A549 (cell line): ENCODE measurements at regions of chr19 and their contacts with region 1.

Region 1: DNA sequence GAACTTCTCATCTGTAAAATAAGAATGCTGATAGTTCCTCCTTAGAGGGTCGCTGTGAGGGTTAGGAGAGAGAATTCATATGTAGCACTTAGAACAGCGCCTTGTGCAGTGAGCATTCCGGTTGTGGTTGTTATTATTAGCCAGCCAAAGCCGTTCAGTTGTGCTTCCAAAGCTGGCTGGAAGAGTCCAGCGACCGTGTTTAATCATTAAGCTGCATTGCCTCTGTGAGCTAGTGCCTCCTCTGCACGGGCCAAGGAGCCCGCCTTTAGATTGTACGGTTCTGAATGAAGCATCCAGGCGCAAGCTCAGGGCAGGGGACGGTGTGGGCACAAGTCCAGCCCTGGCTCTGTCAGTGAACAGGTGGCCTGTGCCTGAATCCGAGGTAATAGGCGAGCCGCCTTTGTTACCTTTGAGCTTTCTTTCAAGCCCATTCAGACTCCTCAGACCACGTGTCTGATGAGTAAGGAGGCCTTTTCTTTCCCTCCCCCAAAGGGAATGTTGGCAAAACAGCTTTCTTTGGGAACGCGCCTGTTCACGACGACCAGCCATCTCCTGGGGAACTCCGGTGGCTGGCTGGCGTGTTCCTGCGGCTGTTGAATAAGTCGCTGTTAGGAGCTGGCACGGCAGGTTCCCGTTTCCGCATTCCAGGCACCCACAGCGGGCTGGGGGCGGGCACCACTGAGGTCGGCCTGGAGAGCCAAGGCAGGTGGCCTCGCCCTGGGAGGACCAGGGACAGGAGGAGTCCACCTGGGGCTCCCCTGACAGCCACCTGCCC is 25.1 kb downstream of the SIPA1L3 start:
- DNase-seq: peak; percentile 96 to 97
- ATAC-seq: peak; percentile 72 to 86
- H3K4me3 ChIP-seq: peak overlapping the region; percentile 51
- H3K27ac ChIP-seq: peak overlapping the region; percentile 88 to 95
- H3K4me1 ChIP-seq: peaks cover 61% of the 10 kb centered on the region
- CTCF ChIP-seq: no peak
- EP300 ChIP-seq: peak in 1 of 2 experiments; percentile 63; a peak in 1 of 5 replicates
- POLR2A ChIP-seq: peak; percentile 66
- RAD21 ChIP-seq: peak; percentile 22 to 46

Region 2: DNA sequence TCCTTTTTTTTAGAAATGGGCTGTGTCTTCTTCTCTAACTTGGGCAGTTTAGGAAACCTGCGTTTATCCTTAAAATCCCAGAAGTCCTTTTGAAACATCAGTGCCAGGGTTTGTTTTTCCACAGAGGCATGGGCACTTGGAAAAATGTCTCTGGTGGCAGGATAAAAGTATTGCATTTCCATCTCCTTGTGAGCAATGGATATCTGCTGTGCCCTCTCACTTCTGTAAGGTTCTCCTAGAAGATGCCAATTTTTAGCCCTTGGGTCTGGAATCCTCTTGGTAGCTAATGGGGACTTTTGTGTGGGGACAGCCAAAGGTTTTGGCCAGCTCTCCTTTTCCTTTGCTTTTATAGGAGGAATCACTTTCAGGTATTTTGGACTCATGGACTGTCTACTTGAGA is 46.7 kb before region 1 on chr19:
- CTCF ChIA-PET with region 1: no interaction called
- POLR2A ChIA-PET with region 1: no interaction called
- DNase-seq: peak; percentile 38 to 43
- ATAC-seq: peak; percentile 76; a peak in 5 of 6 replicates
- H3K4me3 ChIP-seq: no peak overlapping the region
- H3K27ac ChIP-seq: no peak overlapping the region
- H3K4me1 ChIP-seq: no peaks in the 10 kb centered on the region
- CTCF ChIP-seq: no peak
- EP300 ChIP-seq: no peak
- POLR2A ChIP-seq: no peak
- RAD21 ChIP-seq: no peak

Region 3: GRCh38 chr19:37920591-37921450 is 11.2 kb before region 1 on chr19:
- CTCF ChIA-PET with region 1: interaction called, 53 read pairs
- POLR2A ChIA-PET with region 1: interaction called, 11 read pairs
- DNase-seq: no peak
- ATAC-seq: 0 out of 6 replicates have a peak, but pooled peaks of 1 of the 2 experiments have one; percentile 23
- H3K4me3 ChIP-seq: no peak overlapping the region
- H3K27ac ChIP-seq: no peak overlapping the region
- H3K4me1 ChIP-seq: peaks cover 9% of the 10 kb centered on the region; the same call in 2 of the 3 replicates
- CTCF ChIP-seq: no peak
- EP300 ChIP-seq: no peak
- POLR2A ChIP-seq: no peak
- RAD21 ChIP-seq: no peak

Region 4: DNA sequence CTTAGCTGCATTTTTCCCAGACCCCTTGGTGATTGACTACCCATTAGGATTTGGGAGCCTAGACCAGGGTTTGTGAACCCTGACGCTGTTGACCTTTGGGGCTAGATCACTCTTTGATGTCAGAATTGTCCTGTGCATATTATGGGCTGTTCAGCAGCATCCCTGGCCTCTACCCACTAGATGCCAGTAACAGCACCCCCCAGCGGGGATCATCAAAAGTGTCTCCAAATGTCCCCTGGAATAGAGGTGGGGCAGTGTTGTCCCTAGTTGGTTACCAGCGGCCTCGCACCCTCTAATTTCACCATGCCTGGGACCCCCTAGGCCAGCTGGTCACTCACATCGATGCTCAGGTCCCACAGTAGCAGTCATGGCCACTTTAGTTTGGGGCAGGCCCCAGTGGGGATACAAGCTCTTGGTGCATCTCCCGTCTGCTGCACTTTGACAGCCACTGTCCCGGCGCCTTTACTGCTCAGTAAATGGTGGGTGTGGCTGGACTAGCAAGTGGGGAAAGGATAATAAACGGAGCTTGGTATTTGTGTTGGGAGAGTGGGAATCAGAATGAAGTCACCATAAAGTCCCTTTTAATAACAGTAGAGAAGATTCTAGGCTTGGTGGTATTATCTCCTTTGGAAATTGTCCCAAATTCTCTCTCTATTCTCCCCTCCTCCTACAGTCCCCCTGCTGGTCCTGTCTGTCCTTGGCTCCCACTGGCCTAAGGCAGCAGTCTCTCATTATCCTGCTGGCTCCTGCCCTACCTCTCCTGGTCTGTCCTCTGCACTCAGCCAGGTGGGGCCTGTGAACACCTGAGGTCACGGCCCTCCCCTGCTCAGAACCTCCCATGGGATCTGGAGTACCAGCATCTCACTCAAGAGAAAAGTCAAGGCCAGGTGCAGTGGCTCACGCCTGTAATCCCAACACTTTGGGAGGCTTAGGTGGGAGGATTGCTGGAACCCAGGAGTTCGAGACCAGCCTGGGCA is 55.6 kb after region 1 on chr19:
- CTCF ChIA-PET with region 1: interaction called, 45 read pairs
- POLR2A ChIA-PET with region 1: interaction called, 3 read pairs
- DNase-seq: peak in 1 of 2 experiments; percentile 53
- ATAC-seq: peak in 1 of 2 experiments; percentile 55; a peak in 3 of 6 replicates
- H3K4me3 ChIP-seq: no peak overlapping the region
- H3K27ac ChIP-seq: peak overlapping the region in 1 of 2 experiments; percentile 40; a peak in 3 of 6 replicates
- H3K4me1 ChIP-seq: peaks cover 44% of the 10 kb centered on the region
- CTCF ChIP-seq: peak; percentile 57
- EP300 ChIP-seq: no peak
- POLR2A ChIP-seq: no peak
- RAD21 ChIP-seq: peak; percentile 47 to 62

Region 5: DNA sequence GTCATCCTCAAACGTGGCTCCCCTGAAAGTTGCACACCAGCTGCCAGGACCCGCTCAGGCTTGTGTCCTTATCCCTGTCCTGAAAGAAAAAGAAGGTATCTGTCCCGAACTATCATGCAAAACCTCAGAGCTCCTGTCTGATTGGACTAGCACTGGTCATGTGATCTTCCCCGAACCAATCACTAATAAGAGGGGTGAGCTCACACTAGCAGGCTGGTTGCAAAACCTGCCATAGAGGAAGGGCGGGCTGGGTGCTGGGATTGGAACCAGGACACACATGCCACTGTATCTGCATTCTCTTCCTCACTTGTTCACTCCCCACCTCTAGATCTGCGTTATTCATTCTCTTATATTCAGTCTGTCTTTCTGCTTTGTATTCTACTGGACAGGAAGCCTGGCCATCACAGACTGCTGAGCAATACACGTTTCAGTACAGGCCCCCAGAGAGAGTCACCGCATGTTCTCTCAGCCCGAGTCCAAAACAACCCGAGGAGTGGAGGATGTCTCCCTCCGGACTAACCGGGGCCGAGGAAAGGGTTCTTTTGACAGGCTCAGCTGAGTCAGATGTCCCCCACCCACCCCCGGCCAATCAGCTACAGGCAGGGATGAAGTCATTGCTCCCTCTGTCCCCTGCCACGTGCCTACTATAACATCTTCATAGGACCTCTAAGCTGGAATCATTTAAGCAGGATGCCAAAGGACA is 72.6 kb after region 1 on chr19:
- CTCF ChIA-PET with region 1: interaction called, 9 read pairs
- POLR2A ChIA-PET with region 1: interaction called, 13 read pairs
- DNase-seq: peak; percentile 90 to 91
- ATAC-seq: peak; percentile 83 to 89
- H3K4me3 ChIP-seq: no peak overlapping the region
- H3K27ac ChIP-seq: peak overlapping the region; percentile 30 to 61
- H3K4me1 ChIP-seq: peaks cover 40% of the 10 kb centered on the region
- CTCF ChIP-seq: no peak
- EP300 ChIP-seq: no peak
- POLR2A ChIP-seq: no peak
- RAD21 ChIP-seq: no peak

Region 6: DNA sequence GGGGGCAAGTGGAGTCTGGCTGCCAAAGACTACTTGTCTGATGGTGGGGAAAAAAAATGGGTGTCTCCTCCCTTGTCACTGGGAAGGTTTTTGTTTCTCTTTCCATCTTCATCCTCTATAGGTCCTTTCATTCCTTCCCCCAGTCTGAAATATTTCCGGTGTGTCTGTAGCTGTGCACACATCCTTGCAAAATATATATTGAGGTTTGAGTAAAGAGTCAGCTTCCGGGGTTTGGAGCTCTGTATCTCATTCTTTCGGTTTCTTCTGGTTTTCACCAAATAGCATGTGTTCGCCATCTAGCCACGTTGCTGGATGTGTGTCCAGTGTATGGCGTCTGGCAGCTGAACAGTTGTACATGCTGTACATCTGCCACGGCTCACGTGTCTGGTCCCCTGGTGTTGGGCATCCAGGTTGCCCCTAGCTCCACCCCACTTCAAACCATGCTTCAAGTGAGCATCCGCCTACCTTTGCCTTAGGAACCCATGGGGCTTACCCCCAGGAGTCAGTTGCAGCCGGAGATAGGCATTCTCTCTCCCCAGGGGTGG is 117.1 kb after region 1 on chr19:
- CTCF ChIA-PET with region 1: interaction called, 18 read pairs
- POLR2A ChIA-PET with region 1: no interaction called
- DNase-seq: no peak
- ATAC-seq: 0 out of 6 replicates have a peak, but pooled peaks of 1 of the 2 experiments have one; percentile 25
- H3K4me3 ChIP-seq: no peak overlapping the region
- H3K27ac ChIP-seq: no peak overlapping the region
- H3K4me1 ChIP-seq: no peaks in the 10 kb centered on the region
- CTCF ChIP-seq: no peak
- EP300 ChIP-seq: no peak
- POLR2A ChIP-seq: no peak
- RAD21 ChIP-seq: no peak

Region 7: DNA sequence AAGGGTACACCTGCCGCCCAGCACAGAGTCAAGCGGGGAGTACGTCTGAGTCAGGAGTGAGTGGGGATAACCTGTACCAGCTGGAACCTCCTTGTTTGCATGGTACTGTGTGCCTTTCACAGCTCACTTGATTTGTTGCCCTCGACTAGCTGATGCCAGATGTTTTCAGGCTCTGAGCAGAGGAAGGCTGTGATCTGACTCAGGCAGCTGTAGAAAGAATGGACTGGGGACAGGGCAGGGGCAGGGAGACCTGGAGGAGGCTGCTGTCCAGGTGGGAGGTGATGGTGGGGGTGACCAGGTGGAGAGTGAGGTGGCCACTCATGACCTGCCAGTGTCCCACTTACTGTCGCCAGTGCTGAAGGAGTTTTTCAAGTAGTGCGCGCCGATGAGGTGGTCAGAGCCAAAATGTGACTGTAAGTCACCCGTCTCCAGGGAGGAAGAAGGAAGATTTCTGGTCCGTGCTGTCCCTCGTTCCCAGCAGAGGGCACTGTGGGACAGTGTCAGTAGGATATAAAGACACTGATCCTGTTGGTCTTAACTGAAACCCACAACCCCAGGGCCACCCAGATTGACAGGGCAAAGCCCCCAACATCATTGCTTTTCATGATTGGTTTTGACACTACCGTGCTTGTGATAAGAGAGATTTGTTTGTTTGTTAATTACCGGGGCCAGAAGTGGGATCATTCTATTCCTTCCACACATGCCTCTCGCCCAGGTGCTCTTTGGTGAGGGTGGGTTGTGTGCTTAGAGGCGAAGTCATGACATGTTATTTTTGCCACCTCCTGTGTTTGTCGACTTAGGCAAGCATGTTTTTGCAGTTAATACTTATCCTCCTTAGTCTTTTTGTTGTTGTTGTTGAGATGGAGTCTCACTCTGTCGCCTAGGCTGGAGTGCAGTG is 163.6 kb after region 1 on chr19:
- CTCF ChIA-PET with region 1: interaction called, 11 read pairs
- POLR2A ChIA-PET with region 1: no interaction called
- DNase-seq: peak; percentile 86 to 87
- ATAC-seq: peak; percentile 87 to 89
- H3K4me3 ChIP-seq: no peak overlapping the region
- H3K27ac ChIP-seq: peak overlapping the region in 1 of 2 experiments; percentile 35; a peak in 1 of 6 replicates
- H3K4me1 ChIP-seq: no peaks in the 10 kb centered on the region
- CTCF ChIP-seq: peak; percentile 97
- EP300 ChIP-seq: no peak
- POLR2A ChIP-seq: peak; percentile 8; the same call in 1 of the 2 replicates
- RAD21 ChIP-seq: peak; percentile 82 to 83